Activated CD4-positive, alpha-beta T cell treated with anti-CD3 and anti-CD28 coated beads, Interleukin-2, amount 10 ng/mL, durations not matched to agents 24 days and 14 days (primary cell): ENCODE measurements at regions of chr3 and their contacts with region 1.

Region 1: GRCh38 chr3:111610189-111610588 is 15.0 kb upstream of the ZBED2 start:
- DNase-seq: peak; percentile 90
- H3K4me3 Mint-ChIP-seq: peak overlapping the region; percentile 75
- H3K27ac Mint-ChIP-seq: peak overlapping the region; percentile 92
- H3K4me1 Mint-ChIP-seq: peaks cover 87% of the 10 kb centered on the region
- H3K27me3 Mint-ChIP-seq: no peaks in the 10 kb centered on the region

Region 2: GRCh38 chr3:111547631-111548030 is 62.6 kb before region 1 on chr3:
- intact Hi-C with region 1: loop called (anchors 1 kb)
- DNase-seq: peak; percentile 87
- H3K4me3 Mint-ChIP-seq: no peak overlapping the region
- H3K27ac Mint-ChIP-seq: no peak overlapping the region
- H3K4me1 Mint-ChIP-seq: peaks cover 46% of the 10 kb centered on the region
- H3K27me3 Mint-ChIP-seq: no peaks in the 10 kb centered on the region

Region 3: DNA sequence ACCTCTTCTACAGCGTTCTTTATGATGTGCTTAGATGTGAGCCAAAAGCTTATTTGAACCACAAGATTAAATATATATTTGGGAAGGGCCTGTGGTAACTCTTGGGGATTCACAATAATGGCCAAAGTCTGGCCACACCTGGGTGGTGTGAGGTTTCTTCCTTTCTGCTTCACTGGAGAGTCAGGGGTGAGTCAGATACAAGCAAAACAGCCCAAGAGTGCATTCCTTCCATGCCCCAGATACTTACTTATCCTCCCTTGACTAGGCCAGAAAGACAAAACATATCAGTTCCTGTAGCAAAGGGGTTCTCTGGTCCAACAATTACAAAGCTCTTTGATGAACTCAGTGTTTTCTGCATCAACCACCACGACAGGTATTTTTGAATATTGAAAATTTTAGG is 16.0 kb before region 1 on chr3:
- intact Hi-C with region 1: loop called (anchors 1 kb)
- DNase-seq: peak; percentile 67
- H3K4me3 Mint-ChIP-seq: peak overlapping the region; percentile 96
- H3K27ac Mint-ChIP-seq: peak overlapping the region; percentile 96
- H3K4me1 Mint-ChIP-seq: peaks cover 57% of the 10 kb centered on the region
- H3K27me3 Mint-ChIP-seq: no peaks in the 10 kb centered on the region

Region 4: DNA sequence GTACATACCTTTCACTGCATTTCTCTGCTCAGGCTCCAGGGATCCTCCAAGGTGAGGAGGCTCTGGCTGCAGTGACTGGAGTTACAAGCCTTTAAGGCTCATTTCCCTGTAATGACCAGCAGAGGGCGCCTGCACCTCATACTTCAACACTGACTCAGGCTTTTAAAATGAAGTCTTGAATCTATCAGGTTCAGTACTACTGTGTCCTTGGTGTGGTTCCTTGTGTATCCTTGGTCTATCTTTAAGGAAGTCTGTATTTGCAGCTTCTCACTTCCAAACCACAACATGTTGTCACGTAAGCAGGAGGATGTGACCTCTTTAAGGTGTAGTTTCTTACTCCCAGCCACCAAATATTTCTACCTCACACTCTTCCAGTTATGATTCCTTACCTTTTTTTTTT is 107.4 kb after region 1 on chr3:
- intact Hi-C with region 1: no loop called
- DNase-seq: peak; percentile 87
- H3K4me3 Mint-ChIP-seq: no peak overlapping the region
- H3K27ac Mint-ChIP-seq: no peak overlapping the region
- H3K4me1 Mint-ChIP-seq: peaks cover 5% of the 10 kb centered on the region
- H3K27me3 Mint-ChIP-seq: no peaks in the 10 kb centered on the region